ENCODE measurements at regions of chr6 and their contacts with region 1.

Region 1: DNA sequence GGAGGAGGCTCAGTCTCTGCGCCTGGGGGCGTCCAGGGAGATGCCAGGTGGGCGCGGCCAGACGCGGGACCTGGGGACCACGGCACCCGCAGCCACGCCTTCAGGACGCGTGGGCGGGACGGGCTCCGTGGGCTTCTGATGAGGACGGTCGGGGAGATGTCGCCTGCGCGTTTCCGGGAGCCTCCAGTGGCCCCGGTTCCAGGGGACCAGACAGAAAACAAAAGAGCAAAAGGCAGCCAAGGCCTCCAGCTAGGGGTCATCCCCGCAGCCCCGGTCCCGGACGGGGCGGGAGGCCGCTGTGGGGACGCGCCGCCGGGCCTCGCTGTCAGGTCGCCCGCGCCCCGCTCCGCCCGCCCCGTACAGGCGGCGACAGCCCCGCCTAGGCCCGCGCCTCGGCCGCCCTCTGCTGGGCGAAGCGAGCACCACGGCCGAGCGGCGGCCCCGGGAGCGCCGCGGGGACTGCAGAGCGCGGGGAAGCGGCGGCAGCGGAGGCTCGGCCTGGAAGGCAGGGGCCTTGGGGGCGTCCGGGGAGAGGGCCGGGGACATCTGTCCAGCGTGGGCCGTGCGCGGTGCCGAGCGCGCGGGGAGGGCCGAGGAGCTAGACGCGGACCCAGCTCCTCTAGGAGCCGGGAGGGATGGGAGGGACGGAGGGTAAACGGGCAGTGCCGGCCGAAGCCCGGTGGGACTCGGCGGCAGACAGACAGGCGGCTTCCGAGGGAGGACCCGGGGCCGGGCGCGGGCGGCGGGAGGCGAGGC is 48.7 kb downstream of the TMEM242 start:
- DNase-seq: peak; percentile 52 to 96 (median 69)

Region 2: DNA sequence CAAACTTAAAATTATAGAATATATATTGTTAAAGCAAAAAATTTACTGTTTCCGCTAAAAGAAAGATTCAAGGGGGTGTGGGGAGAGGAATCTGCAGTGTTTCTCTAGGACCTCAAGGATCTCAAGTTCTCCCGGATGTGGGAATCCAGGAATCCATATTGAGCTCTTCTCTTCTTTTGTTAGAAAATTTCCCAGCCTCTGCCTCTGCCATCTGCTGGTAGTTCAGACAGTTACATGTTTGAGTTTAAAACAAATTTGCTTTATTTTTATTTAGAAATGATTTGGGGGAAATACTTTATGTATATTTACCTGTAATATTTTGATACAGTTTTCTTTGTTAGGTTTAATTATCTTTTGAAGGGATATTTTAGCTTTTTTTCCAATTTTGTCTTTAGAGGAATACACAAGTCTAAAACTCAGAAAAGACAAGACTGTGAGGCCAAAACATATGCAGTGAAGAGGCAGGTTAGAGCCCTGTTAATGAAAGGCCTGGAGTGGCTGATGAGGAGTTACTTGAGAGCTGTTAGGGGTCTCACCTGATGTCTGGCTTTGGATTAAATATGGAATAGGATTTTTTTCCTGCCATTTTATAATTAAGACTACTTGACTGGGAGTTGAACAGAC is 228.7 kb before region 1 on chr6:
- intact Hi-C with region 1: loop called (anchors 10 kb)
- DNase-seq: no peak

Region 3: GRCh38 chr6:157235600-157236039 is 39.0 kb before region 1 on chr6:
- intact Hi-C with region 1: loop called (anchors 5 kb)
- DNase-seq: peak; percentile 45 to 96 (median 72)